Caco-2 (cell line): ENCODE measurements at regions of chr20 and their contacts with region 1.

Region 1: DNA sequence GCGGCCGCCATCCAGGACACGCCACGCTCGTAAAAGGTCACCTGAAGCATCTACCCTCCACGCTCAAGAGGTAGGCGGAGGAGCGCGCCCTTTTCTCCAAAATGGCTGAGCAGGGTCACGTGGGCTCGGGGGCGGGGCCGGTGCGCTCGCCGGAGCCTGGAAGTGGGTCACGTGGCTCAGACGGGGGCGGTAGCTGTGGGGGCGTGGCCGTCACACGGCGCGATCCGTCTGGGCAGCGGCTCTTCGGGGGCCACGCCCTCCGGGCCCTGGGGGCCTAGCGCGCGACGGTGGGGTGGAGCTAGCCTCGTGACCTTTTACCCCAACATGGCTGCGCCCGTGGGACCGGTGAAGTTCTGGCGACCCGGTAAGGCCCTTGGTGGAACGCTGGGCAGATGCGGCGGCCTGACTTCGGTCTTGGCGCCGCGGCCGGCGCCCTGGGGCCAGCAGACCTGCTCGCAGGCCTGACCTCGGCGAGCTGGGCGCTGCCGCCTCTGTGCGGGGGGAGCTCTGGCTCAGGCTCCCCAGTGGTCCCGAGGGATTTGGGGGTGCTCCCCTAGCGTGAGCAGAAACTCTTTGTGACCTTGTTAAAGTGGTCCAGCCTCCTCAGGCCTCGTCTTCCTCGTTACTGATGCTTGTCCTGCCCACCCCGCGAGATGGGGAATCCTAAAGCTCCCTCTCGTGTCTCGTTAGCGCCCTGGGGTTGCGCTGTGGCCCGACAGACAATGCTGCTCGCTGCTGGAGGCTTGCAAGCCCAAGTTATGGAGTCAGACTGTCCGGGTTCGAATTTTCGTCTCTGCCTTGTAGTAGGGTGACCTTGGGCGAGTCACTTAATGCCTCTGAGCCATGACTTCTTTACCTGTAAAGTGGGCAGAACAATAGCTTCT is at the start of gene DHX35:
- DNase-seq: peak; percentile 100
- H3K4me3 ChIP-seq: peak within 1 kb of the TSS; percentile 84
- H3K4me3 Mint-ChIP-seq: peak within 1 kb of the TSS; percentile 92
- H3K27ac Mint-ChIP-seq: peak within 1 kb of the TSS; percentile 96
- H3K4me1 ChIP-seq: peaks cover 14% of the 10 kb centered on the region; the same call in 1 of the 2 replicates
- H3K4me1 Mint-ChIP-seq: peaks cover 20% of the 10 kb centered on the region
- H3K27me3 ChIP-seq: no peaks in the 10 kb centered on the region
- H3K27me3 Mint-ChIP-seq: no peaks in the 10 kb centered on the region
- CTCF ChIP-seq: peak; percentile 30 to 76
- total RNA-seq, gene DHX35: 25.0 and 29.5 TPM in 2 replicates

Region 2: GRCh38 chr20:38725931-38726803 is 236.1 kb before region 1 on chr20:
- CTCF ChIA-PET with region 1: no interaction called
- POLR2A ChIA-PET with region 1: no interaction called
- intact Hi-C with region 1: no loop called
- DNase-seq: peak; percentile 74 to 79
- H3K4me3 ChIP-seq: no peak overlapping the region
- H3K4me3 Mint-ChIP-seq: no peak overlapping the region
- H3K27ac Mint-ChIP-seq: no peak overlapping the region
- H3K4me1 ChIP-seq: peaks cover 14% of the 10 kb centered on the region
- H3K4me1 Mint-ChIP-seq: peaks cover 12% of the 10 kb centered on the region
- H3K27me3 ChIP-seq: peaks cover 10% of the 10 kb centered on the region
- H3K27me3 Mint-ChIP-seq: peaks cover 67% of the 10 kb centered on the region
- CTCF ChIP-seq: peak; percentile 67 to 71

Region 3: GRCh38 chr20:38893565-38894090 is 68.7 kb before region 1 on chr20:
- CTCF ChIA-PET with region 1: no interaction called
- POLR2A ChIA-PET with region 1: interaction called, 4 read pairs
- intact Hi-C with region 1: loop called (anchors 2 kb)
- DNase-seq: peak; percentile 84 to 91
- H3K4me3 ChIP-seq: peak overlapping the region; percentile 27
- H3K4me3 Mint-ChIP-seq: peak overlapping the region; percentile 60
- H3K27ac Mint-ChIP-seq: no peak overlapping the region
- H3K4me1 ChIP-seq: peaks cover 3% of the 10 kb centered on the region; the same call in 1 of the 2 replicates
- H3K4me1 Mint-ChIP-seq: peaks cover 17% of the 10 kb centered on the region
- H3K27me3 ChIP-seq: no peaks in the 10 kb centered on the region; the same call in 1 of the 2 replicates
- H3K27me3 Mint-ChIP-seq: peaks cover 6% of the 10 kb centered on the region
- CTCF ChIP-seq: peak; percentile 100

Region 4: DNA sequence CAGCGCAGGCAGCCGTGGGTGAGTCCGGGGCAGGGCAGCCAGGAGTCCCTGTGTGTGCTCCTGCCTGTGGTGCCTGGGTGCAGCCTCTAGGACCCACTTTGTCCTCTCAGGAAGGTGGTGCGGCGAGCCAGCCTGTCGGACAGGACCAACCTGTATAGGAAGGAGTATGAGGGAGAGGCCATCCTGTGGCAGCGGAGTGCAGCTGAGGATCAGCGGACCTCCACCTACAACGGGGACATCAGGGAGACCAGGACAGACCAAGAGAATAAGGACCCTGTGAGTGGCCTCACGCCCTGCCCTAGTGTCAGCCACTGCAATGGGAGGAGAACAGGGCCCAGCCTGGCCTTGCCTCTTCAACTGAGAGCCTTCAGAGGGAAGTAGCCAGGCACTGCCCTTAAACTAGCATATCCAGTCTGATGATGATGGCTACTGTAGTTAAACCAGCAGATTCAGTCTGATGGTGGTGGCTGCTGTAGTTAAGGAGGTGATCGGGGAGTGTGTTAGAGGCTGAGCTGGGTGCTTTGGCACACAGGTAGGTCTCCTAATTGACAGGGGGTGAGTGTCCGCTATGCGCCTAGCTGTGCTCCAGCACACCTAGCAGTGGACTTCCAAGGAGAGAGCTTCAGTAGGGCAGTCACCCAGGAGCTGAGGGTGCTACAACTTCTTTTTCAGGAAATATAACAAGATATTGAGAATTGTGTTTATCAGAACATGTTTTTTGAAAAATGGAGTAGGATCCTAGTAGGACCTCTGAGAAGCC is 54.2 kb before region 1 on chr20:
- CTCF ChIA-PET with region 1: interaction called, 11 read pairs
- POLR2A ChIA-PET with region 1: interaction called, 16 read pairs
- intact Hi-C with region 1: loop called (anchors 1 kb)
- DNase-seq: no peak
- H3K4me3 ChIP-seq: no peak overlapping the region
- H3K4me3 Mint-ChIP-seq: no peak overlapping the region
- H3K27ac Mint-ChIP-seq: no peak overlapping the region
- H3K4me1 ChIP-seq: peaks cover 5% of the 10 kb centered on the region
- H3K4me1 Mint-ChIP-seq: peaks cover under 1% of the 10 kb centered on the region
- H3K27me3 ChIP-seq: no peaks in the 10 kb centered on the region
- H3K27me3 Mint-ChIP-seq: peaks cover 7% of the 10 kb centered on the region
- CTCF ChIP-seq: no peak

Region 5: GRCh38 chr20:38926142-38926933 is 35.9 kb before region 1 on chr20 and contains the start of gene FAM83D:
- CTCF ChIA-PET with region 1: interaction called, 32 read pairs
- POLR2A ChIA-PET with region 1: interaction called, 55 read pairs
- intact Hi-C with region 1: loop called (anchors 1 kb)
- DNase-seq: peak; percentile 100
- H3K4me3 ChIP-seq: peak within 1 kb of the TSS; percentile 93
- H3K4me3 Mint-ChIP-seq: peak within 1 kb of the TSS; percentile 92
- H3K27ac Mint-ChIP-seq: peak within 1 kb of the TSS; percentile 89
- H3K4me1 ChIP-seq: peaks cover 14% of the 10 kb centered on the region
- H3K4me1 Mint-ChIP-seq: peaks cover 38% of the 10 kb centered on the region
- H3K27me3 ChIP-seq: no peaks in the 10 kb centered on the region
- H3K27me3 Mint-ChIP-seq: no peaks in the 10 kb centered on the region
- CTCF ChIP-seq: no peak
- total RNA-seq, gene FAM83D: 82.4 and 86.3 TPM in 2 replicates

Region 6: GRCh38 chr20:38941726-38942389 is 20.4 kb before region 1 on chr20:
- CTCF ChIA-PET with region 1: interaction called, 13 read pairs
- POLR2A ChIA-PET with region 1: no interaction called
- intact Hi-C with region 1: no loop called
- DNase-seq: peak; percentile 42
- H3K4me3 ChIP-seq: no peak overlapping the region
- H3K4me3 Mint-ChIP-seq: no peak overlapping the region
- H3K27ac Mint-ChIP-seq: peak overlapping the region; percentile 16
- H3K4me1 ChIP-seq: no peaks in the 10 kb centered on the region; the same call in 1 of the 2 replicates
- H3K4me1 Mint-ChIP-seq: peaks cover 23% of the 10 kb centered on the region
- H3K27me3 ChIP-seq: no peaks in the 10 kb centered on the region
- H3K27me3 Mint-ChIP-seq: no peaks in the 10 kb centered on the region
- CTCF ChIP-seq: peak; percentile 43 to 53

Region 7: GRCh38 chr20:39004508-39004907 is 42.2 kb after region 1 on chr20:
- CTCF ChIA-PET with region 1: no interaction called
- POLR2A ChIA-PET with region 1: no interaction called
- intact Hi-C with region 1: no loop called
- DNase-seq: no peak
- H3K4me3 ChIP-seq: no peak overlapping the region
- H3K4me3 Mint-ChIP-seq: no peak overlapping the region
- H3K27ac Mint-ChIP-seq: no peak overlapping the region
- H3K4me1 ChIP-seq: no peaks in the 10 kb centered on the region
- H3K4me1 Mint-ChIP-seq: no peaks in the 10 kb centered on the region
- H3K27me3 ChIP-seq: no peaks in the 10 kb centered on the region
- H3K27me3 Mint-ChIP-seq: no peaks in the 10 kb centered on the region
- CTCF ChIP-seq: no peak